GM12878 (cell line): ENCODE measurements at regions of chr2 and their contacts with region 1.

Region 1: DNA sequence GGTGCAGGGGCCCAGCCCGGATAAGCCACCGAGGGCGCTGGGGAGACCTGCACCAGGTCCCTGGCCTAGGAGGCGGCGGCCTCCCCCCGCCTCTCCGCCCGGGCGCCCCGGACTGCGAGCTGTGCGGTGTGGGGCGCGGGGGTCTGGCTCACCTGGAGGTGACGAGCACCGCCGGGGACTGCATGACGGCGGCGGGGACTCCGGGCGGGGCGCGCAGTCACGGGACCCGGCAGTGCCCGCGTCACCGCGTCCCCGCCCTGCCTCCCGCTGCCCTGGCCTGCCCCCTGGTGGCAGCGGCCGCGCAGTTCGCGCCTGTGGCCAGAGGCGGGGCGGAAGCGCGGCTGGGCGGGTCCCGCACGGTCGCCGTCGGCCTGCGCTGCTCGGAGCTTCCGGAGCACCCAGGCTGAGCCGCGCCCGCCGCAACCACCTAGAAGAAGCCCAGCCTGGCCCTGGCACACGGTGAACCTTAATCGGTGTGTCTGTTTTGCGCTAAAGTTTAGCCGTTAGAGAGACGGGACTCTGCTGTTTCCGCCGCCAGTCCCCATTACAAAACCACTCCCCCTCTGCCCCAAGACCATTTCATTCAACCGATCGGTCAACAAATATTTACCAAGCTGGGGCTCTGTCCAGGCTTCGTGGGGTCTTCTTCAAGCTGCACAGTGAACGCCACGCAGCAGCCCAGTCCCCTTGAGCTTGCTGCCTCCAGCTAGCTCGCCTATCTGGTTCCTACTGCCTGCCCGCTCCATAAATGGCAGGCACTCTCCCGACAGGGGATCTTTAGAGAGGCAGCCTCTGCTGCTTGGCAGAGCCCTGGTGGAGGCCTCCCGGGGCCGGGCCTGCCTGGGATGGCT is at the start of gene HS1BP3:
- DNase-seq: peak; percentile 43
- ATAC-seq: peak; percentile 98
- H3K4me3 ChIP-seq: peak within 1 kb of the TSS; percentile 96
- H3K27ac ChIP-seq: no peak within 1 kb of the TSS; the same call in 1 of the 2 replicates
- H3K4me1 ChIP-seq: peaks cover 4% of the 10 kb centered on the region
- H3K27me3 ChIP-seq: peaks cover 0 to 1% of the 10 kb centered on the region in 2 experiments; a peak in 1 of 4 replicates
- CTCF ChIP-seq: peak; percentile 72 to 97 (median 91); a peak in 4 of 6 replicates
- EP300 ChIP-seq: no peak
- POLR2A ChIP-seq: peak; percentile 89
- RAD21 ChIP-seq: peak; percentile 68
- polyA plus RNA-seq, gene HS1BP3: 0.47 to 0.57 TPM

Region 2: DNA sequence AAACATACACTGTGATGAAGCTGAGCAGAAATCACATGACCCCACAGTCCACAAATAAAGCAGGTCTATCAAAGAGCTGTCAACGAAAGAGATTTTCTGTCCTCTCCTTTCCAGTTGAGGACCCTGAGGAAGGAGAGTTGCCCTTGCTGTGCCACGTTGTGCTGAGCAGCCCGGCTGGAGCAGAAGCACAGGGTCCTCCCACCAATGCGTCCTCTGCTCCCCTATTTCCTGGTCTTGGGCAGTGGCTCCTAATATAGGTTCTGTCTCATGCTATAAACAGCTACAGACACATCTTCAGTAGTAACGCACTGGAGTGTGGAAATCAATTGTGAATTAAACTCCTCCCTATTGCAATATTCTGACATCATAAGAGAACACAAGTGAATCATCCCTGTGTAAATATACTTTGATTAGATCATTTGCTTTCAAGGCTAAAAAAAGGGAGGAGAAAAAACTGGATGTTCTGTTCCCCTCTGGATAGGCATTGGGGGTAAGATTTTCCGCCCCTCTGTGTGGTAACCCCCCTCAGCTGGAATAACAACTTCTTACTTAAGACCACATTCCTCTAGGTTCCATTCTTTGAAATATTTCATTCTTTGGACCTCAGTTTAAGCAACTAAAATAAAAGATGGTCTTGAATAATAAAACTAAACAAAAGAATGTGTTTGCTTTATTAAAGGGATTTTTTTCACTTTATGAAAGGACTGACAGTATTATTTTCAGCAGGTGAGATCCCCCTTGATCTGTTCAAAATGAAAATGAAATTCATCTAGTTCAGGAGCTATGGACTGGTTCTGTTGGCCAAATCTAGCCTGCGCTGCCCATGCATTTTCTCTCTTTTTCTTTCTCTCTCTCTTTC is 212.5 kb before region 1 on chr2:
- CTCF ChIA-PET with region 1: interaction called, 44 read pairs
- POLR2A ChIA-PET with region 1: interaction called, 4 read pairs
- RAD21 ChIA-PET with region 1: interaction called, 21 read pairs
- SMC1A ChIA-PET with region 1: interaction called, 5 read pairs
- in situ Hi-C with region 1: no loop called
- intact Hi-C with region 1: no loop called
- DNase-seq: no peak
- ATAC-seq: no peak
- H3K4me3 ChIP-seq: no peak overlapping the region
- H3K27ac ChIP-seq: no peak overlapping the region
- H3K4me1 ChIP-seq: no peaks in the 10 kb centered on the region
- H3K27me3 ChIP-seq: peaks cover 2 to 3% of the 10 kb centered on the region in 2 experiments; a peak in 2 of 4 replicates
- CTCF ChIP-seq: no peak
- EP300 ChIP-seq: no peak
- POLR2A ChIP-seq: no peak
- RAD21 ChIP-seq: no peak

Region 3: DNA sequence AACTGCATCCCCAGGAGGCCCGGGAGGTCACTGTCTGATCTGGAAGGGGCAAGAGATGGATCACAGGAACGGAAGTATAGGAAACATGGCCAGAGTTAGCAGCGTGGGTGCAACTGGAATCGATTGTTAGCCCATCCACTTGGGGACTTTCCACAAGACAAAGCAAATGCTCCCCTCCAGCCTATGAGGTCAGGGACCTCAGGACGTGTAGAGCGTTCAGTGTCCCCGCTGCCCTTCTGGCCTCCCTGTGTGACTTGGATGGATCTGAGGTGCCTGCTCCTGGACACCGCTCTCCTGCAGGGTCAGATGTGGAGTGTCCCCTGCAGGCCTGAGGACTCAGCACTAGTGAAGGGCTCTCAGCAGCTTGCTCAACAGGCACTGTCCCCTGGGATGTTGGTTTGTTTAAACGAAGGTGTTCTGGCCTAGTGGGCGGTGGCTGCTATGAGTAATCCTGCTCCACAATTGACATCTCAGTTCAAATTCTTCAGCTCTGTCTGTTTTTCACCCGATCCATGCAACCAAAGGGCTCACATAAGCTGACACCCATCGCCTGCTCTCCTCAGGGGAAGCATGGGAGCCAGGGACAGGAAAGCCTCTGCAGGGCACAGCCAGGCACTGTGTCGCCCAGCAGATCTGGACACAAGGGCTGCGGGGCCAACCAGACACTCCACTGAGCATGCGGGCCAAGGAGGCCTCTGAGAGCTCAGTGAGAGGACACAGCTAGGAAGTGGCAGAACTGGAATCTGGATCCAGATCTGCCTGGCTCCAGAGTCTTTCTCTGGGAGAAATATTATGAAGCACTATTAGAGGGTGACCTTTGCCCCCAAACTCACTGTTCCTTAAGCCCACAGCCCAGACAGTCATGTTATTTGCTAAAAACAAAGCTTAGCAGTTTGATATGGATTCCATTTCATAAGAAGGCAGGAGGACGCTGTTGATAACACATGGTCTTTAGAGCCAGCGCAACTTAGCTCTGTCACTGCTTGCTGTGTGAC is 125.8 kb before region 1 on chr2:
- CTCF ChIA-PET with region 1: no interaction called
- POLR2A ChIA-PET with region 1: interaction called, 3 read pairs
- RAD21 ChIA-PET with region 1: no interaction called
- SMC1A ChIA-PET with region 1: interaction called, 12 read pairs
- in situ Hi-C with region 1: no loop called
- intact Hi-C with region 1: no loop called
- DNase-seq: peak; percentile 76
- ATAC-seq: peak; percentile 95
- H3K4me3 ChIP-seq: no peak overlapping the region
- H3K27ac ChIP-seq: peak overlapping the region; percentile 64
- H3K4me1 ChIP-seq: peaks cover 18% of the 10 kb centered on the region
- H3K27me3 ChIP-seq: no peaks in the 10 kb centered on the region
- CTCF ChIP-seq: peak in 1 of 3 experiments; percentile 37; a peak in 1 of 6 replicates
- EP300 ChIP-seq: peak; percentile 25 to 62; a peak in 2 of 4 replicates
- POLR2A ChIP-seq: 0 out of 2 replicates have a peak, but pooled peaks have one; percentile 49
- RAD21 ChIP-seq: no peak

Region 4: GRCh38 chr2:20635675-20636584 is 15.2 kb before region 1 on chr2:
- CTCF ChIA-PET with region 1: interaction called, 12 read pairs
- POLR2A ChIA-PET with region 1: interaction called, 3 read pairs
- RAD21 ChIA-PET with region 1: interaction called, 12 read pairs
- SMC1A ChIA-PET with region 1: interaction called, 3 read pairs
- in situ Hi-C with region 1: no loop called
- intact Hi-C with region 1: no loop called
- DNase-seq: no peak
- ATAC-seq: peak; percentile 95
- H3K4me3 ChIP-seq: no peak overlapping the region
- H3K27ac ChIP-seq: no peak overlapping the region
- H3K4me1 ChIP-seq: peaks cover 17% of the 10 kb centered on the region
- H3K27me3 ChIP-seq: no peaks in the 10 kb centered on the region
- CTCF ChIP-seq: peak; percentile 81 to 93 (median 88)
- EP300 ChIP-seq: no peak
- POLR2A ChIP-seq: no peak
- RAD21 ChIP-seq: peak; percentile 98

Region 5: DNA sequence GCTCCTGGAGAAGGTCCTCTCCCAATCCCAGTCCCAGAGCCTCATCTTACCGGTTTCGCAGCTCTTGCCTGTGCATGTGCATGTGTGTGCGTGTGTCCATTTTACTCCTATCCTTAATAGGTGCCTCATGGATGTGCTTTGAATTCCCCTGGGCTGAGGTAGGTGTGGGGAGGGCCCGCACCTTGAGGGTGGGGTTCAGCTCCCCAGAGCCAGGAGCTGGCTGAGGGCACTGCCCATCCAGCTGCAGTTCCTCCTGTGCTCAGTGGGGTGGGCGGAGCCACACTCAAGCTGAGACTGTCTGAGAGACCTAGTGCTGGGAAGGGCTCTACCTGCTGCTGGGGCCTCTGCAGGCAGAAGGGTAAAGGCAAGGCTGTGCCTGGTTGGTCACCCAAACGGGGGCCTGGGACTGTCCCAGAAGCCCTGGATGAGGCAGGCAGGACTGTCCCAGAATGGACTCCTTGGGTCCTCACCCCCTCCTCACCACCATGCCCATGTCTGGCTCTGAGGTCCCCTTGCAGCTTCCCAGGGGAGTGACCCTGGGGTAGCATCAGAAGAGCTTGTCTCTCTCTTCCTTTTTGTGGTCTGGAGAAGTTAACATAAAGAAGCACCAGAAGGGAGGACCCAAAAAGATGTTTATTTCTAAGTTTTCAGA is 24.7 kb after region 1 on chr2:
- CTCF ChIA-PET with region 1: interaction called, 12 read pairs
- POLR2A ChIA-PET with region 1: no interaction called
- RAD21 ChIA-PET with region 1: interaction called, 3 read pairs
- SMC1A ChIA-PET with region 1: no interaction called
- in situ Hi-C with region 1: no loop called
- intact Hi-C with region 1: no loop called
- DNase-seq: peak; percentile 15
- ATAC-seq: peak; percentile 89
- H3K4me3 ChIP-seq: no peak overlapping the region
- H3K27ac ChIP-seq: peak overlapping the region; percentile 69
- H3K4me1 ChIP-seq: peaks cover 37% of the 10 kb centered on the region
- H3K27me3 ChIP-seq: peaks cover 0 to 6% of the 10 kb centered on the region in 2 experiments; a peak in 3 of 4 replicates
- CTCF ChIP-seq: no peak
- EP300 ChIP-seq: no peak
- POLR2A ChIP-seq: no peak
- RAD21 ChIP-seq: no peak

Region 6: GRCh38 chr2:20962939-20963557 is 311.9 kb after region 1 on chr2:
- CTCF ChIA-PET with region 1: interaction called, 16 read pairs
- POLR2A ChIA-PET with region 1: no interaction called
- RAD21 ChIA-PET with region 1: interaction called, 4 read pairs
- SMC1A ChIA-PET with region 1: interaction called, 5 read pairs
- in situ Hi-C with region 1: no loop called
- intact Hi-C with region 1: no loop called
- DNase-seq: no peak
- ATAC-seq: peak; percentile 91
- H3K4me3 ChIP-seq: no peak overlapping the region
- H3K27ac ChIP-seq: no peak overlapping the region
- H3K4me1 ChIP-seq: no peaks in the 10 kb centered on the region
- H3K27me3 ChIP-seq: no peaks in the 10 kb centered on the region; a peak in 1 of 4 replicates
- CTCF ChIP-seq: peak; percentile 81 to 84 (median 82)
- EP300 ChIP-seq: no peak
- POLR2A ChIP-seq: no peak
- RAD21 ChIP-seq: peak; percentile 86

Region 7: DNA sequence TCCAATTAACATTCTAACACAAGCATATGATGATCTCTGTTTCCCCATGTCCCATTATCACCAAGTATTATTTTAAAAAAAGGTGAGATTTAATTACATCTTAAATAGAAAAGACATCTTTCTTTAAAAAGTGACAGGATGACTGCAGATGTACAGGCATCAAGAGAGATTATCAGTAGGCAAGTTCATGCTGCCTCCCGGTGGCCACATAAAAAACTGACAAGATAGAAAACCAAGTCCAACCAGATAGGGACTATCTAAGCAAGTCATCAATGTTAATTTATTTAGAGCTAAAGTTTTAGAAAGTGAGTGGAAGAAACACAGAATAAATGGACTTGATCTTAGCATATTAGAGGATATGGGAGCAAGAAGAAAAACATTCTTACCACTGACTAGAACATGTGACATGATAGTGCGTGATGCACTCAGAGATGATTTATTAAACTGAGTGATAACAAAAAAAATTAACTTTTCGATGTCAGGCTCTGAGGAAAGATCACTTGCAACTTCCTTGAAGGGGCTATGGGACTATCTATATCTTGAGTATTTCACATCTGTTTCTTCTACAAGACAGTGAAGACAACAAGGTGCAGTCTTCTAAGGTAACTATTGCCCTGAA is 467.3 kb after region 1 on chr2:
- CTCF ChIA-PET with region 1: no interaction called
- POLR2A ChIA-PET with region 1: no interaction called
- RAD21 ChIA-PET with region 1: no interaction called
- SMC1A ChIA-PET with region 1: no interaction called
- in situ Hi-C with region 1: loop called (anchors 25 kb)
- intact Hi-C with region 1: no loop called
- DNase-seq: no peak
- ATAC-seq: peak; percentile 71
- H3K4me3 ChIP-seq: no peak overlapping the region
- H3K27ac ChIP-seq: no peak overlapping the region
- H3K4me1 ChIP-seq: no peaks in the 10 kb centered on the region
- H3K27me3 ChIP-seq: no peaks in the 10 kb centered on the region
- CTCF ChIP-seq: peak; percentile 39 to 54 (median 45); a peak in 4 of 6 replicates
- EP300 ChIP-seq: no peak
- POLR2A ChIP-seq: no peak
- RAD21 ChIP-seq: peak; percentile 45